ENCODE measurements at regions of chr10 and their contacts with region 1.

Region 1: DNA sequence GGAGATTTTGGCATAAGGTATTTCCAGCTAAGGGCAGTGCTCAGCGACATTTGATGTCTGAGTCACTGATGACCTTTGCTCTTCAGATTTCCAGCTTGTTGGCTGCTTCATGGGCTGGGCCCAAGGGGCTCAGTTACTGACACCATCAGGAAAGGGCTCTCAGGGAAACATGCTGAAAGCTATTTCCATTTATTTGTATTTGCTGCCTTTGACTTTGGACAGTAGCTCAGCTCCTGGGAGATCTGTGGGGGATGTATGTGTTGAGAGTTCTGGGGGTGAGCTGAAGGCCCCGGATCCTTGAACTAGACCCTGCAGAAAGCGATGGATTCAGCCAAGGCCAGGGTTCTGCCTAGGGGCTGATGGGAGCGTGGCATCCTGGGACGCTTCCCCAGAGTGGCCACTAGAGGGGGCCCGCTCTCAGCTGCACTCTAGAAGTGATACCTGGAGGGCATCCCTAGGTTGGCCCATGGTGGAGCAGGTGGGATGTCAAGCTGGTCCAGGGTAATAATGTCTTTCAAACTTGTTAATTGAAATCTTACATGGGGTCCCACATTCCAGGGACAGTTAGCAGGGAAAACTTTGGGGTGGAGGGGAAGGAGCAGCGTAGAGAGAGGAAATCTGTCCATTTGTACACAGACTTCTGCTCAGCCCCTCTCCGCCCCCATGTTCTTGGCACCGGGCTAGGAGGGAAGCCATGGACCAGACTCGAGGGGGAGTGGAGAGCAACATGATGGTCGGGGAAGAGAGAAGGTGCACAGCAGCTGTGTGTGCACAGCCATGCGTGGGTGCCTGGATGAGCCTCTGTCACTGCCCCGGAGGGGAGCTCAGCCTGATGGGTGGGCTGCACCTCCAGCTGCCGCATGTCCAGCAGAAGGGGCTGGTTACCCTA is 3.0 kb upstream of the BTBD16 start:
- DNase-seq: no peak
- H3K4me3 ChIP-seq: no peak overlapping the region
- H3K27me3 ChIP-seq: no peaks in the 10 kb centered on the region
- CTCF ChIP-seq: peak; percentile 98

Region 2: DNA sequence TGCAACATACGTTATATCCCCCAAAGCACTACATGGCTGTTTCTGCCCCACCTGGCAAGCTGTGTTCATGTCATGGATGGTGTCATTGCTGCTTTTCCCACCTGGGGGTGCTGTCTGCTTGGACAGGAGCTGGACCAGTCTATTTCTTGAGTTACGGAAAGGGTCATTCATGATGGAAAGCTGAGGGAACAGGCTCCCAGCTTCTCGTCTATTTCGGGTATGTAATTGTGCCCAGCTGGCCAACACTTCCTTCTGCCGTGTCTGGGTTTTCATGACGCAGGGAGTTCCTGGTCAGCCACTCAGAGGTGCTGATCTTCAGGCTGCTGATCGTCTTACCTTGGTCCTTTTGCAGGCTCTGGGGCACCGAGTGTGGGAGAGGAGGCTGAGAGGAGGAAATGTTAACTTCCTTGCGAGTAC is 11.6 kb after region 1 on chr10:
- CTCF ChIA-PET with region 1: interaction called, 67 read pairs
- POLR2A ChIA-PET with region 1: no interaction called
- DNase-seq: no peak
- H3K4me3 ChIP-seq: no peak overlapping the region
- H3K27me3 ChIP-seq: no peaks in the 10 kb centered on the region
- CTCF ChIP-seq: peak; percentile 56

Region 3: DNA sequence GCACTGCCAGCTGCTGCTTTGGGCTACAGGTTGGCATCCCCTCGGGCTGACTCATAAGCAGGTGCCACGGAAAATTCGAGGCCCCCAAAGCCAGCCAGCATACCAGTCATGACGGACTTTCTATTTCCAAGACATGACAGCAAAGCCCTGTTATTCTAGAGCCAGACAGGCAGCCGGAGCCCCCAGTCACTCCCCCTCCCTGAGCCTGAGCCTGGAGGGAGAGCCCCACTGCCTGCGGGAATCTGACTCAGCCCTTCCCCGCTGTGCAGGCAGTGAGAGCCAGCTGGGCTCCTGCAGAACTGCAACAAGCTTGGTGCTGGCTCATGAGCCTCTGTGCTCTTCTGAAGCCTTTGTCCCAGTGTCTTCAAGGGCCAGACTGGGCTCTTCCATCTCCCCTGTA is 18.8 kb after region 1 on chr10:
- CTCF ChIA-PET with region 1: interaction called, 22 read pairs
- POLR2A ChIA-PET with region 1: no interaction called
- DNase-seq: no peak
- H3K4me3 ChIP-seq: no peak overlapping the region
- H3K27me3 ChIP-seq: peaks cover 1% of the 10 kb centered on the region
- CTCF ChIP-seq: no peak